SK-N-SH (cell line): ENCODE measurements at regions of chr12 and their contacts with region 1.

Region 1: DNA sequence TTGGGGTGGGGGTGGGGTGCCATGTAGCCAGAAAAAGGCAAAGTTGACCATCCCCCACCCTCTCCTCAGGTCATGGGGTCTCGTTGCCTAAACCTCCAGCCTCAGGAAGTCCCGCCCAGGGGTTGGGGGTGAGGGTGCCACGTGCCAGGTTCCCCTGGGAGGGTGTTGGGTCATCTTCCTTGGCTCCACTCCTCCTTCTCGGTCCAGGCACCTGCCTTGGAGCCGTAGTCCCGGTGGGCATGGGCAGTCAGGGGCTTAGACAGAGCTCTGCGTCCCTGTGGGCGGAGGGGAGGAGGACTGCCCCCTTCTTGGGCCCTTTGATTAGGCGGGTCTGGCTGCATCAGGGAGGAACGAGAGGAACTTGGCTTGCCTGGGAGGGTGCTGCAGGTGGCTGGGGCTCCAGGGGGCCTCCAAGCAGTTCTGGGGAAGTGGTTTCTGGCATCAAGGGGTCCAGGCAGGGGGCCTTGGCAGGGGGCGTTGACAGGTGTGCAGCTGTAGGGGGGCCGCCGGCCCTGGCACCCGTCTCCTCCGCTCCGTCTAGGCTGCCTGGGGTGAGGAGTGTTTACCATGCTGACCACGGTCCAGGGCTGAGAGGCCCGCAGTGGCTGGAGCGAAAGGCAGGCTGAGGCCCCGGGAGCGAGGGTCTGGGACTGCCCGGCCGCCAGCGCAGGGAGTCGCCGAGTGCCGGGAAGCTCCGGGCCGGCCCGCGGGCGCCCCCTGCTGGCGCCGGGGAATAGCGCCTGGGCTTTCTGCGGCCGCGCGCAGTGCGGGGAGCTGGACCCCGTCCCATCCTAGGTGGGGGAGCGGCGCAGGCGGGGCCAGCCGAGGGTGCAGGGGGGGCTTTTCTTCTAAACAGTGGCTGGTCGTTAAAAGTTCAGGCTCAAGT is 7.9 kb downstream of the SETD1B start:
- DNase-seq: peak; percentile 96
- H3K4me3 ChIP-seq: peak overlapping the region; percentile 62 to 93
- H3K27ac ChIP-seq: peak overlapping the region; percentile 56 to 74; a peak in 3 of 4 replicates
- H3K4me1 ChIP-seq: peaks cover 22 to 24% of the 10 kb centered on the region in 2 experiments; a peak in 2 of 4 replicates
- H3K27me3 ChIP-seq: no peaks in the 10 kb centered on the region
- CTCF ChIP-seq: peak; percentile 91
- EP300 ChIP-seq: no peak
- RAD21 ChIP-seq: peak; percentile 79

Region 2: DNA sequence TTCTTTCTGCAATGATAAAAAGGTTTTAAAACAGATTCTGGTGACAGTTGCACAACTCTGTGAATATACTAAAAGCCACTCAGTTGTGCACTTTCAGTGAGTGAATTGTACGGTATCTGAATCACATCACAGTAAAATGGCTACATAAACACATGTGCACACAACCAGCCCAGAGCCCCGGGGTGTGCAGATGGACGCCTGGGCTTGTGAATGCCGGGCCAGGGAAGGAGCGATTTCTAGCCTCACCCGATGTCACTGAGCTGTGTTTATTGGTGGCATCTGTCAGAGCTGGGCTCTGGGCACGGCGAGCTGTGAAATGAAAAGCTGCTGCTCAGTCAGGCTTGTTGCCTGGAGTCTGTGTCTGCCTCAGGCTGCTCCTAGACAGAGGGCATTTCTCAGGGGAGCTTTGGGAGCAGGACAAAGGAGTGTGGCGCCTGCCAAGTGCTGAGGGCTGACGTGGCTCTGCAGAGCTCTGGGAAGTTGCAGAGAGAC is 44.1 kb before region 1 on chr12:
- CTCF ChIA-PET with region 1: interaction called, 36 read pairs
- POLR2A ChIA-PET with region 1: no interaction called
- DNase-seq: peak; percentile 94
- H3K4me3 ChIP-seq: no peak overlapping the region
- H3K27ac ChIP-seq: peak overlapping the region; percentile 70 to 90
- H3K4me1 ChIP-seq: peaks cover 17 to 24% of the 10 kb centered on the region in 2 experiments; a peak in 1 of 4 replicates
- H3K27me3 ChIP-seq: no peaks in the 10 kb centered on the region
- CTCF ChIP-seq: no peak
- EP300 ChIP-seq: peak in 1 of 2 experiments; percentile 75; a peak in 1 of 4 replicates
- RAD21 ChIP-seq: peak; percentile 1; the same call in 1 of the 2 replicates

Region 3: DNA sequence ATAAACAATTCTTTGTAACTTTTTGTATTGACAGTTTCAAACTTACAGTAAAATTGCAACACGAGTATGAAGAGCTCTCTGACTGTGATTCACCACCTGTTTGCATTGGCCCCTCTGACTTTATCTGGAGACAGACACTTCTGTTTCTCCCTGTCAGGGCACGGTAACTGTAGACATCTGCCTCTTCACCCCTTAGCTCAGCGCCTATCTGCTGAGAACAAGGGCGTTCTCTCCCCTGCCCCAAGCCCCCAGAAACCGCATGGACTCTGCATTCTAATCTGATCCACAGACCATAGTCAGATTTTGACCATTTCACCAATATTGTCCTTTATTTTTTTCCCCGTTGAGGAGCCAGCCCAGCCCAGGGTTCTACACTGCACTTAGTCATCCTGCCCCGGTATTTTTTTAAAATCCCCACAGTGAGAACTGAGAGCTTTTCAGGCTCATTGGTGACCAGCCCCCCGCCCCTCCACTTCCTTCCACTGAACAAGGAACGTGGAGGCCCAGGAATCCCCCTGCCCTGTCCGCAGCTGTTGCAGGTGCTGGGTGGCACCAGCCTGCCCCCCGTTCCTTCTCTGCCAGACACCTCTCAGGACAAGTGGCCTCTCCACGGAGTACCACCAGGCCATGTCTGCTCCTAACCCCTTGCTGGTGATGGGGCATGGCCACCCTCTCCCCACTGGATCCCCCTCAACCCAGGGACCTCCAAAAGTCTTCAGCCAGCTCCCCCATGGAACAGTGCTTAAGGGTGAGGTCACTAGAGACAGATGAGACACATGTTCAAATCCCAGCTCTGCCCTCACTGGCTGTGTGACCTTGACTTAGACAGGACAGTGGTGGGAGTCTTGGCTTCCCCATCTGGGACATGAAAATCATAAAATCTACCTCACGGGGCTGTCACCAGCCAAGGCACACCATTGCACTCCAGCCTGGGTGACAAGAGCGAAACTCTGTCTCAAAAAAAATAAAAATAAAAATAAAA is 29.4 kb before region 1 on chr12:
- CTCF ChIA-PET with region 1: interaction called, 675 read pairs
- POLR2A ChIA-PET with region 1: no interaction called
- DNase-seq: no peak
- H3K4me3 ChIP-seq: no peak overlapping the region
- H3K27ac ChIP-seq: no peak overlapping the region; a peak in 1 of 4 replicates
- H3K4me1 ChIP-seq: peaks cover 0 to 13% of the 10 kb centered on the region in 2 experiments; a peak in 2 of 4 replicates
- H3K27me3 ChIP-seq: no peaks in the 10 kb centered on the region
- CTCF ChIP-seq: no peak
- EP300 ChIP-seq: no peak
- RAD21 ChIP-seq: no peak

Region 4: GRCh38 chr12:121839106-121839992 is 27.7 kb after region 1 on chr12:
- CTCF ChIA-PET with region 1: interaction called, 40 read pairs
- POLR2A ChIA-PET with region 1: no interaction called
- DNase-seq: peak; percentile 99
- H3K4me3 ChIP-seq: peak overlapping the region; percentile 57 to 74
- H3K27ac ChIP-seq: peak overlapping the region; percentile 32 to 48; a peak in 2 of 4 replicates
- H3K4me1 ChIP-seq: no peaks in the 10 kb centered on the region; a peak in 1 of 4 replicates
- H3K27me3 ChIP-seq: no peaks in the 10 kb centered on the region
- CTCF ChIP-seq: peak; percentile 40; the same call in 1 of the 2 replicates
- EP300 ChIP-seq: no peak
- RAD21 ChIP-seq: no peak

Region 5: GRCh38 chr12:121872546-121873215 is 61.0 kb after region 1 on chr12:
- CTCF ChIA-PET with region 1: interaction called, 13 read pairs
- POLR2A ChIA-PET with region 1: interaction called, 10 read pairs
- DNase-seq: peak; percentile 86
- H3K4me3 ChIP-seq: no peak overlapping the region; a peak in 1 of 4 replicates
- H3K27ac ChIP-seq: peak overlapping the region; percentile 85 to 90
- H3K4me1 ChIP-seq: peaks cover 10 to 13% of the 10 kb centered on the region in 2 experiments; a peak in 3 of 4 replicates
- H3K27me3 ChIP-seq: no peaks in the 10 kb centered on the region
- CTCF ChIP-seq: no peak
- EP300 ChIP-seq: peak; percentile 13 to 19; a peak in 2 of 4 replicates
- RAD21 ChIP-seq: no peak; the same call in 1 of the 2 replicates